A673 (cell line): ENCODE measurements at regions of chr4 and their contacts with region 1.

Region 1: DNA sequence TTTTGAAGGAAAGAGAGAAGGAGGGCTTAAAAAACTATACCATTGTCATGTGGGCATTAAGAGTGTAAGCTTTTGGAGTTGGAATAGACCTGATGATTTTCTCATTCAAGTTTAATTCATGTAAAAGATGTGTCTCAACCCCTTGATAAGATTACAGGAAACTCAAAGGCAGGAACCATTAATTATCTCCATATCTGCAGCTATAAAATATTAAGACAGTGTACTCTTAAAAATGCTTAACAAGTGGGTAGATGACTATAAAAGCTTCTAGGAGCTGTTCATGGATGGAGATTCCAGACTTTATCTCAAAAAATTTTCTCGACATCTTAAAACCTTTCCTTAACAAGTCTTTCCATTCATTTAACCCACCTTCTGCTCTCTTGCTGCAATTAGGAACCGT is 208.3 kb downstream of the PALLD start:
- DNase-seq: peak; percentile 20
- H3K4me3 ChIP-seq: no peak overlapping the region
- H3K27ac ChIP-seq: no peak overlapping the region
- H3K4me1 ChIP-seq: no peaks in the 10 kb centered on the region
- H3K27me3 ChIP-seq: no peaks in the 10 kb centered on the region
- CTCF ChIP-seq: no peak

Region 2: GRCh38 chr4:168577624-168578023 is 127.5 kb before region 1 on chr4:
- CTCF ChIA-PET with region 1: no interaction called
- POLR2A ChIA-PET with region 1: interaction called, 12 read pairs
- intact Hi-C with region 1: no loop called
- DNase-seq: no peak
- H3K4me3 ChIP-seq: no peak overlapping the region
- H3K27ac ChIP-seq: no peak overlapping the region
- H3K4me1 ChIP-seq: peaks cover 6% of the 10 kb centered on the region
- H3K27me3 ChIP-seq: no peaks in the 10 kb centered on the region
- CTCF ChIP-seq: no peak